CD4-positive, alpha-beta memory T cell (primary cell): ENCODE measurements at regions of chr1 and their contacts with region 1.

Region 1: DNA sequence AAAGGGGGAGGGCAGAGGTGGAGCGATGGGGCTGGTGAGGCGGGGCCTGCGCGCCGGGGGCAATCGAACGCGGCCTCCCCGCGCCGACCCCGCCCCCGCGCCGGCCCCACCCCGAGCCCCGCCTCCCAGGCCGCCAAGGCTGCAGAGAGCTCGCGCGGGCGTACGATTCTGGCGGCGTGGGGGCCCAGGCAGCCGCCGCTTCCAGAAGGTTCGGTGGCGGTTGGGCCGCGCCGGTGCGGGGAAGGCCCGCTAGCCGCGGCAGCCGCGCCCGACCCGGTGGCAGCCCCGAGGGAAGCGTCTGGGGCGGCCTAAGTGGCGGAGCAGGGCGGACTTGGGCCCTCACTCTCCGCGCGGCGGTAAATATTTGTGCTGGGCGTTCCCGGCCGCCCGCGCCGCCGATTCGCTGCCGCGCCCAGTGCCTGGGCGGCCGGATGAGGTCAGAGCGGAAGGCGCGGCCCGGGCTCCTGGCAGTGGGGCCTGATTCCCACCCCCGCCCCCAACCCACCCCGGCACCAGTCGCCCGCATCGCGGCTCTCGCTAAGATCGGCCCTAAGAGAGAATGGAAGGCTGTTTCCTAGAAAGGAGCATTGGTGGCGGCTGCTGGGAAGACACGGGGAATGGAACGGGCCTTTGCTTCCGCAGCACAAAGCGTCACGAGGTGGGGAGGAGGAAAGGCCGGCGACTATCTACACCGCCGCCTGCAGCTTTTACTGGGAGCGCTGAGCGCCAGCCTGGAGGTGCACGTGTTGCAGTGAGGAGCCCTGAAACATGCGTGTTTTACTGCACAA is at the start of gene ACOT7:
- DNase-seq: peak; percentile 90 to 93 (median 91)
- H3K4me3 ChIP-seq: peak within 1 kb of the TSS in 1 of 2 donors; percentile 61
- H3K4me3 Mint-ChIP-seq: peak within 1 kb of the TSS; percentile 86 to 94 (median 90)
- H3K27ac ChIP-seq: peak within 1 kb of the TSS; percentile 67
- H3K27ac Mint-ChIP-seq: peak within 1 kb of the TSS; percentile 91 to 97 (median 94)
- H3K4me1 ChIP-seq: peaks cover 25% of the 10 kb centered on the region
- H3K4me1 Mint-ChIP-seq: peaks cover 12 to 29% (median 18%) of the 10 kb centered on the region in 4 donors
- H3K27me3 ChIP-seq: no peaks in the 10 kb centered on the region
- H3K27me3 Mint-ChIP-seq: no peaks in the 10 kb centered on the region
- total RNA-seq, gene ACOT7: 2.7 to 3.1 TPM

Region 2: GRCh38 chr1:5992026-5992813 is 401.4 kb before region 1 on chr1 and contains the start of gene NPHP4:
- CTCF ChIA-PET with region 1: no interaction called
- POLR2A ChIA-PET with region 1: no interaction called
- intact Hi-C with region 1: loop called (anchors 5 kb)
- DNase-seq: peak; percentile 99
- H3K4me3 ChIP-seq: peak within 1 kb of the TSS; percentile 86 to 92
- H3K4me3 Mint-ChIP-seq: peak within 1 kb of the TSS; percentile 95 to 98 (median 96)
- H3K27ac ChIP-seq: peak within 1 kb of the TSS; percentile 96
- H3K27ac Mint-ChIP-seq: peak within 1 kb of the TSS; percentile 97 to 99 (median 98)
- H3K4me1 ChIP-seq: peaks cover 37% of the 10 kb centered on the region
- H3K4me1 Mint-ChIP-seq: peaks cover 13 to 39% (median 30%) of the 10 kb centered on the region in 4 donors
- H3K27me3 ChIP-seq: no peaks in the 10 kb centered on the region
- H3K27me3 Mint-ChIP-seq: no peaks in the 10 kb centered on the region
- total RNA-seq, gene NPHP4: 7.6 to 9.6 TPM

Region 3: DNA sequence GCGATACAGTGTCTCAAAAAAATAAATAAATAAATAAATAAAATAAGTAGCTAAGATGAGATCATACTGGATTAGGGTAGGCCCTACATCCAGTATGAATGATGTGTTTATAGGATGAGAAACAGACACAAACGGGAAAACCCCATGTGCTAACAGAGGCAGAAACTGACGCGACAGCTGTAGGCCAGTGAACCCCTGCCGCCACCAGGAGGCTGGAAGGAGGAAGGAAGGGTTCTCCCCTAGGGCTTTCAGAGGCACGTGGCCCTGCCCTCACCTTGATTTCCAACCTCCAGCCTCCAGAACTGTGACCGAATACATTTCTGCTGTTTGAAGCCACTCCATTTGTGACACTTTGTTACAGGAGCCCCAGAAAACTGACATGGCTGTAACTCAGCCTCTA is 252.0 kb before region 1 on chr1:
- CTCF ChIA-PET with region 1: no interaction called
- POLR2A ChIA-PET with region 1: no interaction called
- intact Hi-C with region 1: no loop called
- DNase-seq: no peak
- H3K4me3 ChIP-seq: no peak overlapping the region
- H3K4me3 Mint-ChIP-seq: no peak overlapping the region
- H3K27ac ChIP-seq: no peak overlapping the region
- H3K27ac Mint-ChIP-seq: no peak overlapping the region
- H3K4me1 ChIP-seq: no peaks in the 10 kb centered on the region
- H3K4me1 Mint-ChIP-seq: no peaks in the 10 kb centered on the region
- H3K27me3 ChIP-seq: no peaks in the 10 kb centered on the region
- H3K27me3 Mint-ChIP-seq: peaks cover 0 to 2% of the 10 kb centered on the region in 2 donors

Region 4: DNA sequence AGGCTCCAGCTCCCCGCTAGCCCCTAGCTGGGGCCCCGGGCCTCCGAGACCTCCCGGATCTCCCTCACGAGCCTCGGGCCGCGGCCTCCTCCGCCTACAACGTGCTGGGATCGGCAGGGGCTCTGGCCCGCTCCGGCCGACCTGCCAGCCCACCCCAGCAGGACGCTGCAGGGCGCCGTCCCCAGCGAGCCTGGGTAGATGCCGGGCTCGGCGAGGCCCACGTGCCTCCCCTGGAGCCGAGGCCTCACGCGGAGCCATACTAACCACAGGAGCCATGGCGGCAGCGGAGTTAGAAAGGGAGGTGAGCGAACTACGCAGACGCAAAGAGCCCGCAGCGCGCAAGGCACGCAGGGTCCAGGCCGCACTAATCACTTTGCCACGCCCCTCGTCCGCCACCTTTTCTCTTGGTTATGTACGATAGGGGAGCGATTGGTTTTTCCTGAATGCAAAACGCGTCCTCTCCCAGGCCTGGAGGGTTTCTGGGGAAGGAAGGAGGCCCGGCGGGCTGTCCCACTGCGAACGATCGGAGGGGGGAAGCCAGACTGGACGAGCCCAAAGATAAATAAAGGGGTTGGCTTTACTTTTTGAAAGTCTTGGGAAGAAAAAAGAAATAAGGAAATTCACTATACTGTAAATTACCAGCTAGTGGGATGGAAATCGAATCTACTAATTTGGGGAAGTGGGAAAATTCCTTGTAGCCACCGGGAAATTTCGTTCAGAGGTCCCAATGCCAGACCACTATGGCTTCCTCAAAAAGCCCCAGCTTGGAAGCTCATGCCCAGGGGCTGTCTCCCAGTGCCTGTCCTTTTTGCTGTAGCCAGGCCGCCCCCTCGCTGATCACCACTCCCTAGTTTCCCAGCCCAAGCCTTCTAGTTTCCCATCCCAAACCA is 194.1 kb before region 1 on chr1 and contains the start of gene RPL22:
- CTCF ChIA-PET with region 1: no interaction called
- POLR2A ChIA-PET with region 1: interaction called, 3 read pairs
- intact Hi-C with region 1: loop called (anchors 5 kb)
- DNase-seq: peak; percentile 94 to 99 (median 97)
- H3K4me3 ChIP-seq: peak within 1 kb of the TSS; percentile 57 to 84
- H3K4me3 Mint-ChIP-seq: peak within 1 kb of the TSS; percentile 88 to 94 (median 92)
- H3K27ac ChIP-seq: peak within 1 kb of the TSS; percentile 74
- H3K27ac Mint-ChIP-seq: peak within 1 kb of the TSS; percentile 86 to 97 (median 95)
- H3K4me1 ChIP-seq: peaks cover 38% of the 10 kb centered on the region
- H3K4me1 Mint-ChIP-seq: peaks cover 31 to 53% (median 42%) of the 10 kb centered on the region in 4 donors
- H3K27me3 ChIP-seq: no peaks in the 10 kb centered on the region
- H3K27me3 Mint-ChIP-seq: peaks cover 0 to 2% of the 10 kb centered on the region in 2 donors
- total RNA-seq, gene RPL22: 491 to 503 TPM

Region 5: DNA sequence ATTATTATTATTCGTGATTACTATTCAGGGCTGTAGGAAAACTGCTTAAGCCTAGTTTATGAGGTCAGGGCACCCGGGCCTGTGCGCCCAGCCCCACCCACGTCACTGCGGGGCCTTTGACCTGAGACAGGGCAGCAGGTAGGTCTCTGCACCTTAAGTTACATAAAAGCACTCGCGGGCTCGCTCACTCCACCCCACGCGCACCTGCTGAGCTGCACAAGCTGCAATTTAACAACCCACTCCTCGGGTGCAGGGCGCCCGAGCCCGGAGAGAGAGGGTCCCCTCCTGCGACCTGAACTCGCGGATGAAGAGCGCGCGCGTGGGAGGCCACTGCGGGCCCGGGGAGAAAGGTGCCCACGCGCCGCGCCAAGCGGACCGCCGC is 158.3 kb before region 1 on chr1:
- CTCF ChIA-PET with region 1: no interaction called
- POLR2A ChIA-PET with region 1: interaction called, 4 read pairs
- intact Hi-C with region 1: loop called (anchors 1 kb)
- DNase-seq: peak in 1 of 5 donors; percentile 17
- H3K4me3 ChIP-seq: peak overlapping the region; percentile 60 to 86
- H3K4me3 Mint-ChIP-seq: peak overlapping the region; percentile 84 to 93 (median 88)
- H3K27ac ChIP-seq: peak overlapping the region; percentile 42
- H3K27ac Mint-ChIP-seq: peak overlapping the region; percentile 15 to 84 (median 57)
- H3K4me1 ChIP-seq: peaks cover 11% of the 10 kb centered on the region
- H3K4me1 Mint-ChIP-seq: peaks cover 6 to 16% (median 12%) of the 10 kb centered on the region in 4 donors
- H3K27me3 ChIP-seq: peaks cover 5% of the 10 kb centered on the region
- H3K27me3 Mint-ChIP-seq: peaks cover 3 to 9% of the 10 kb centered on the region in 2 donors

Region 6: GRCh38 chr1:6343506-6344405 is 49.8 kb before region 1 on chr1:
- CTCF ChIA-PET with region 1: interaction called, 173 read pairs
- POLR2A ChIA-PET with region 1: interaction called, 18 read pairs
- intact Hi-C with region 1: loop called (anchors 1 kb)
- DNase-seq: peak; percentile 50 to 56 (median 51)
- H3K4me3 ChIP-seq: no peak overlapping the region
- H3K4me3 Mint-ChIP-seq: peak overlapping the region in 1 of 8 donors; percentile 37
- H3K27ac ChIP-seq: no peak overlapping the region
- H3K27ac Mint-ChIP-seq: peak overlapping the region in 2 of 7 donors; percentile 29 to 84
- H3K4me1 ChIP-seq: peaks cover 13% of the 10 kb centered on the region
- H3K4me1 Mint-ChIP-seq: peaks cover 8 to 20% (median 11%) of the 10 kb centered on the region in 4 donors
- H3K27me3 ChIP-seq: no peaks in the 10 kb centered on the region
- H3K27me3 Mint-ChIP-seq: no peaks in the 10 kb centered on the region

Region 7: GRCh38 chr1:6359216-6360116 is 34.1 kb before region 1 on chr1:
- CTCF ChIA-PET with region 1: interaction called, 14 read pairs
- POLR2A ChIA-PET with region 1: interaction called, 52 read pairs
- intact Hi-C with region 1: loop called (anchors 1 kb)
- DNase-seq: peak; percentile 50 to 74 (median 62)
- H3K4me3 ChIP-seq: peak overlapping the region; percentile 24 to 38
- H3K4me3 Mint-ChIP-seq: peak overlapping the region; percentile 71 to 90 (median 77)
- H3K27ac ChIP-seq: peak overlapping the region; percentile 76
- H3K27ac Mint-ChIP-seq: peak overlapping the region; percentile 94 to 97 (median 96)
- H3K4me1 ChIP-seq: peaks cover 54% of the 10 kb centered on the region
- H3K4me1 Mint-ChIP-seq: peaks cover 29 to 65% (median 47%) of the 10 kb centered on the region in 4 donors
- H3K27me3 ChIP-seq: no peaks in the 10 kb centered on the region
- H3K27me3 Mint-ChIP-seq: no peaks in the 10 kb centered on the region

Region 8: GRCh38 chr1:6365047-6365446 is 28.5 kb before region 1 on chr1:
- CTCF ChIA-PET with region 1: interaction called, 14 read pairs
- POLR2A ChIA-PET with region 1: interaction called, 52 read pairs
- intact Hi-C with region 1: loop called (anchors 1 kb)
- DNase-seq: peak; percentile 63 to 74 (median 72)
- H3K4me3 ChIP-seq: no peak overlapping the region
- H3K4me3 Mint-ChIP-seq: peak overlapping the region in 5 of 8 donors; percentile 33 to 69 (median 60)
- H3K27ac ChIP-seq: no peak overlapping the region
- H3K27ac Mint-ChIP-seq: peak overlapping the region; percentile 64 to 94 (median 90)
- H3K4me1 ChIP-seq: peaks cover 47% of the 10 kb centered on the region
- H3K4me1 Mint-ChIP-seq: peaks cover 18 to 49% (median 27%) of the 10 kb centered on the region in 4 donors
- H3K27me3 ChIP-seq: no peaks in the 10 kb centered on the region
- H3K27me3 Mint-ChIP-seq: no peaks in the 10 kb centered on the region

Region 9: DNA sequence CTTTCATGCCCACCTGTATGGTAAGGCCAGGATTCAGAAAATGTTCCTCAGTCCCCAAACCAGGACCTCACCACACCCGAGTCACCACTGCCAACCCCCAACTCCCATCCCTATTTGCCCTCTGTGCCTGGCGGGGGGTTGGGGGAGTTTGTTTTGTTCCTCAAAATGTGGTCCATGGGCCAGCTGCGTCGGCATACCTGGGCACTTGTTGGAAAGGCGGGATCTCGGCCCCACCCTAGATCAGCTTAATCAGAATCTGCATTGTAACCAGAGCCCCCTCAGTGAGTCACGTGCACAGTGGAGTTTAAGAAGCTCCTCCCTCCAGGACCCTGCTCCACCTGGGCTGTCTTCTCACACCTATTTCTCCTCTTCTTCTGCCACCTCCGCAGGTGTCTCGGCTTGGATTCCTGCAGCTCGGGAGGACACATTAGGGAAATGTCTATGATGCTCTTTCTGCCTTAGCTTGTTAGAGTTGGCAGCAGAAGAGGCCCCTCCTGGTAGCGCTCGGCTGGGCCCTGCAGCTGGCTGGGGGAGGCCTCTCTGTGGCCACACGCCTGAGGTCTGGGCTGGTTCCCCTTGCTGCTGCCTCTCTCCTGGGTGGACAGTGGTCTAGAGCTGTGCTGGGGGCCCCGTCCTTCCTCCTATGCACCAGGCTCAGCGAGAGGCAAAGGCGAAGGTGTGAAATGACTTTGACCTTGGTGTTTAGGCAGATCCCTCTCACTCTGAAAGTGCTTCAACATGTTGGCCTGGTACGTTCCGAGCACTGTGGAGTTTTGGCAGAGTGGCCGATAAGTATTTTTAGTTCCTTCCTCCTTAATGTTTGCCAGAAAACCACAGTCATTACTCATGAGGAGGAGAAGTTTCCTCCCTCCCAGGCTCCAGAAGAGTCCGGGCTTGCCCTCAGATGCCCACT is 349.9 kb after region 1 on chr1:
- CTCF ChIA-PET with region 1: no interaction called
- POLR2A ChIA-PET with region 1: no interaction called
- intact Hi-C with region 1: no loop called
- DNase-seq: peak; percentile 11 to 52 (median 35)
- H3K4me3 ChIP-seq: no peak overlapping the region
- H3K4me3 Mint-ChIP-seq: no peak overlapping the region
- H3K27ac ChIP-seq: no peak overlapping the region
- H3K27ac Mint-ChIP-seq: peak overlapping the region in 1 of 7 donors; percentile 73
- H3K4me1 ChIP-seq: no peaks in the 10 kb centered on the region
- H3K4me1 Mint-ChIP-seq: peaks cover 1 to 11% (median 7%) of the 10 kb centered on the region in 4 donors
- H3K27me3 ChIP-seq: no peaks in the 10 kb centered on the region
- H3K27me3 Mint-ChIP-seq: peaks cover 5 to 11% of the 10 kb centered on the region in 2 donors